IMR-90 (cell line): ENCODE measurements at regions of chr12 and their contacts with region 1.

Region 1: DNA sequence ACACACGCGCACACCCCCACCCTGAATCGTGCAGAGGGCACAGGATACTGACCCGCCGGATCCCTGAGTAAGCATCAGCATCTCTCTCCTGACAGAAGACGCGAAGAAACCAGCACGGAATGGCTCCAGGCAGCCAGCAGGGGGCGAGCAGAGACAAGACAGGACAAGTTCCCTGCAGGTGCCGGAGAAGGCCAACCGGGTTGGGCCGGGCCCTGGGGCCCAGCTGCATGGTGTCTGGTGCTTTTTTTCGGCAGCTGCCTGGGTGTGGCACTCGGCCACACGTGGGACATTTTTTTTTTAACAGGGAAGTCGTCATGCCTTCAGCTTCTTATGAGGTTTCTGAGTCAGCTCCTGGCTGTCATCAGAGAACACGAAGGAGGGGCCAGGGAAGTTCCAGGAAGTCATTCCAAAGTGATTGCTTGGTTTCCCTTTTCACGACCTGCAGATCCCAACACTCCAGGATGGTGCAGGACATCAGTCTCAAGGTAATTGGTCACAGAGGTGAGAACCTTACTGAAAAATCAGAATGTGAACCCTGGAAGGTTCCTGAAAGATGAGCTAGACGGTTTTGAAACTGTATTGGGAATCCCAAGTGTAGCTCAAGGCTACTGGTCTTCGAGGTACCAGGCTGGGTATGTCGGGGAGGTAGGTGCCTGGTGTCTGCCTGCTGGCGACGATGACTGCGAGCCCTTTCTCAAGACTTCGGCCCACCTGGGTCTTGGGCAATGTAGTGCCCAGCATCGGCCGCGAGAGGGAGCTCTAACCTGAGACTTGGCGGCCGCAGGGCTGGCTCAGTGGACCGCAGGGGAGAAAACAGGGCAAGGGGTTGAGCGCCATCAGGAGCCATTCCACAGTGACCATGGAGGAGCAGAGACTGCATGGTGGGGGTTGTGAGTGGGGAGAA is 190.8 kb upstream of the PRMT8 start:
- DNase-seq: peak; percentile 96
- ATAC-seq: peak; percentile 79
- H3K4me3 ChIP-seq: no peak overlapping the region
- H3K27ac ChIP-seq: peak overlapping the region; percentile 36; the same call in 1 of the 2 replicates
- H3K4me1 ChIP-seq: peaks cover 9% of the 10 kb centered on the region
- H3K27me3 ChIP-seq: no peaks in the 10 kb centered on the region; the same call in 1 of the 2 replicates
- CTCF ChIP-seq: peak; percentile 92
- POLR2A ChIP-seq: peak; percentile 41; the same call in 1 of the 2 replicates
- RAD21 ChIP-seq: peak; percentile 92

Region 2: GRCh38 chr12:3288690-3289089 is 11.5 kb before region 1 on chr12:
- CTCF ChIA-PET with region 1: interaction called, 15 read pairs
- POLR2A ChIA-PET with region 1: no interaction called
- dilution Hi-C with region 1: no loop called
- in situ Hi-C with region 1: no loop called
- intact Hi-C with region 1: no loop called
- DNase-seq: no peak
- ATAC-seq: no peak
- H3K4me3 ChIP-seq: no peak overlapping the region
- H3K27ac ChIP-seq: no peak overlapping the region
- H3K4me1 ChIP-seq: no peaks in the 10 kb centered on the region
- H3K27me3 ChIP-seq: no peaks in the 10 kb centered on the region; the same call in 1 of the 2 replicates
- CTCF ChIP-seq: no peak
- POLR2A ChIP-seq: no peak
- RAD21 ChIP-seq: no peak

Region 3: DNA sequence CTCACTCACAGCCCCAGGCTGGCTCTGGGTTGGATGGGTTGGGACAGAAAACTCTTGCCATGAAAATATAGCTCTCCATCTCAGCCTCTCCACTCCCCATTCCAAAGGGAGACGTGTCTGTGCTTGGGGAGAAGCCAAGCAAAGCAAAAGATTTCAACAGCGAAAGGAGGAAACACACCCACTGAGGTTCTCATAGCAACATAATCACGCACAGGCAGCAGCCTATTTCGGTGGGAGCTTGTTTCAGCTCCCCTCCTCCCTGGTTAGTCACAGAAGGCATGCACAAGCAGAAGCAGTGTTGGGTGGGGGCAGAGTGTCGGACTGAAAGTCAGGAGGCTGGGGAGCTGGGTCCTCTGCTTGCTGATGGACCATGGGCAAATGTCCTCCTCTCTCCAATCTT is 188.9 kb after region 1 on chr12:
- CTCF ChIA-PET with region 1: no interaction called
- POLR2A ChIA-PET with region 1: no interaction called
- dilution Hi-C with region 1: no loop called
- in situ Hi-C with region 1: no loop called
- intact Hi-C with region 1: loop called (anchors 10 kb)
- DNase-seq: no peak
- ATAC-seq: no peak
- H3K4me3 ChIP-seq: no peak overlapping the region
- H3K27ac ChIP-seq: no peak overlapping the region
- H3K4me1 ChIP-seq: no peaks in the 10 kb centered on the region
- H3K27me3 ChIP-seq: peaks cover 38% of the 10 kb centered on the region
- CTCF ChIP-seq: no peak
- POLR2A ChIP-seq: no peak
- RAD21 ChIP-seq: no peak

Region 4: GRCh38 chr12:3770886-3771285 is 470.7 kb after region 1 on chr12:
- CTCF ChIA-PET with region 1: interaction called, 15 read pairs
- POLR2A ChIA-PET with region 1: no interaction called
- dilution Hi-C with region 1: no loop called
- in situ Hi-C with region 1: no loop called
- intact Hi-C with region 1: no loop called
- DNase-seq: peak; percentile 61
- ATAC-seq: no peak
- H3K4me3 ChIP-seq: no peak overlapping the region
- H3K27ac ChIP-seq: no peak overlapping the region
- H3K4me1 ChIP-seq: no peaks in the 10 kb centered on the region
- H3K27me3 ChIP-seq: peaks cover 6% of the 10 kb centered on the region
- CTCF ChIP-seq: no peak
- POLR2A ChIP-seq: no peak
- RAD21 ChIP-seq: no peak

Region 5: DNA sequence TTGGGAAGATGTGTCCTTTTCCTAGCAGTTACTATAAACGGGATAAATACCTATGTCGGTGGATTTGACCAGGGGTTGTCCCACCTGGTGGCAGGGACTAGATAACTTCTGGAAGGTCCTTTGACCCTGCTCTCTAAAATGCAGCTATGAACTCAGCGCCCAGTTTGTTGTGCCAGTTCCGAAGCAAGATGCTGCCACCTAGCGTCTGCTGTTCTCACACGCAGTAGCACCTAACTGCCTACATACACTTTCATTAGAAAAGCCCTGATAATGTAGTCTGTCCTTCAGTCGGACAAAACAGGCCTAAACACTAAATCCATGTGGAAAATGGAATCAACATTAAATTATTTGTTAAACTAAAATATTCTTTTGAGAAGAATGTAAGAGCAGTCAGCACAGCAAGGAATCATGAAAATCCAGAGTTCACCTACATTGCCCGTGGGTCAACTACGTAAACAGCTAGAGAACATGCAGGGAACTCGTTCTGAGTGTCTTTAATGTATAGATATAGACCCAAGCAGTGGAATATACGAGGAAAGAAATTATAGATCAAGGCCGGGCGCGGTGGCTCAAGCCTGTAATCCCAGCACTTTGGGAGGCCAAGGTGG is 503.8 kb after region 1 on chr12:
- CTCF ChIA-PET with region 1: interaction called, 22 read pairs
- POLR2A ChIA-PET with region 1: no interaction called
- dilution Hi-C with region 1: no loop called
- in situ Hi-C with region 1: loop called (anchors 10 kb)
- intact Hi-C with region 1: loop called (anchors 1 kb)
- DNase-seq: peak; percentile 72
- ATAC-seq: peak; percentile 93
- H3K4me3 ChIP-seq: no peak overlapping the region
- H3K27ac ChIP-seq: no peak overlapping the region
- H3K4me1 ChIP-seq: no peaks in the 10 kb centered on the region
- H3K27me3 ChIP-seq: no peaks in the 10 kb centered on the region
- CTCF ChIP-seq: peak; percentile 81
- POLR2A ChIP-seq: no peak
- RAD21 ChIP-seq: peak; percentile 81

Region 6: GRCh38 chr12:3872800-3873636 is 572.8 kb after region 1 on chr12 and contains the start of gene PARP11:
- CTCF ChIA-PET with region 1: no interaction called
- POLR2A ChIA-PET with region 1: interaction called, 4 read pairs
- dilution Hi-C with region 1: no loop called
- in situ Hi-C with region 1: no loop called
- intact Hi-C with region 1: loop called (anchors 10 kb)
- DNase-seq: peak; percentile 95
- ATAC-seq: peak; percentile 100
- H3K4me3 ChIP-seq: peak within 1 kb of the TSS; percentile 82
- H3K27ac ChIP-seq: peak within 1 kb of the TSS; percentile 97
- H3K4me1 ChIP-seq: no peaks in the 10 kb centered on the region
- H3K27me3 ChIP-seq: no peaks in the 10 kb centered on the region
- CTCF ChIP-seq: no peak
- POLR2A ChIP-seq: peak; percentile 74
- RAD21 ChIP-seq: no peak
- total RNA-seq, gene PARP11: 1.7 and 1.8 TPM in 2 replicates

Region 7: DNA sequence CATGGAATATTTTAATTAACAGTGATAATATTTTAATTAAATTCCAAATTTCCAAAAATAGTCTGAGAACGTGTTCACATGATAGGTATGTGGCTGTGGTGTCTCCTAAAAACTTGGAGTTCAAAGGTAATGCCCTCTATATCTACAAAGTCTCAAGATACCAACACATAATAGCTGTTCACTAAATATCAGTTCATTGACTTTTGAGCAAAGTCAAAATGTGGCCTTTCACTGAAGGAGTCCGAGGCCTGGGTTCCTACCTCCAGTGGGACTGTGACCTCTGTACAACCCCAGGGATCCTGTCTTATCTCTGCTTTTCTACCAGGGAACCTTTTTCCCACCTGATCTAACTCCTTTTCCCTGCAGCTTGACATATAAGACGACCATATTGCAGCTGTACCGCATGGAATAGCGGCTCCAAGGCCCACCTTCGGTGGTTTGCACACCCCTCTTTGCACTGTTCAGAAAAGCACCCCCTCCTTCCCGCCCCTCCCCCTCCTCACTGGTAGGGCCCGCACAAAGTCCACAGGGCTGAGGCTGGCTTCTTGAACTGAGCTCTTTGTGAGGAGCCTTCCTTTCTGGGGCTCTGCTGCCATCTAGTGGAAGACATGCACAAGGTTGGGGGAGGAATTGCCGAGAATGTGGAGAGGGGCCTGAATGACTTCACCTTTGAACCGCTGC is 976.5 kb after region 1 on chr12:
- CTCF ChIA-PET with region 1: no interaction called
- POLR2A ChIA-PET with region 1: no interaction called
- dilution Hi-C with region 1: no loop called
- in situ Hi-C with region 1: no loop called
- intact Hi-C with region 1: loop called (anchors 1 kb)
- DNase-seq: peak; percentile 82
- ATAC-seq: peak; percentile 77
- H3K4me3 ChIP-seq: no peak overlapping the region
- H3K27ac ChIP-seq: no peak overlapping the region
- H3K4me1 ChIP-seq: peaks cover 3% of the 10 kb centered on the region; the same call in 1 of the 2 replicates
- H3K27me3 ChIP-seq: peaks cover 47% of the 10 kb centered on the region
- CTCF ChIP-seq: peak; percentile 97
- POLR2A ChIP-seq: no peak
- RAD21 ChIP-seq: peak; percentile 95